ENCODE measurements at regions of chr2 and their contacts with region 1.

Region 1: GRCh38 chr2:118882709-118883210 is 35.3 kb upstream of the EN1 start:
- DNase-seq: peak; percentile 62
- CTCF ChIP-seq: peak; percentile 92

Region 2: DNA sequence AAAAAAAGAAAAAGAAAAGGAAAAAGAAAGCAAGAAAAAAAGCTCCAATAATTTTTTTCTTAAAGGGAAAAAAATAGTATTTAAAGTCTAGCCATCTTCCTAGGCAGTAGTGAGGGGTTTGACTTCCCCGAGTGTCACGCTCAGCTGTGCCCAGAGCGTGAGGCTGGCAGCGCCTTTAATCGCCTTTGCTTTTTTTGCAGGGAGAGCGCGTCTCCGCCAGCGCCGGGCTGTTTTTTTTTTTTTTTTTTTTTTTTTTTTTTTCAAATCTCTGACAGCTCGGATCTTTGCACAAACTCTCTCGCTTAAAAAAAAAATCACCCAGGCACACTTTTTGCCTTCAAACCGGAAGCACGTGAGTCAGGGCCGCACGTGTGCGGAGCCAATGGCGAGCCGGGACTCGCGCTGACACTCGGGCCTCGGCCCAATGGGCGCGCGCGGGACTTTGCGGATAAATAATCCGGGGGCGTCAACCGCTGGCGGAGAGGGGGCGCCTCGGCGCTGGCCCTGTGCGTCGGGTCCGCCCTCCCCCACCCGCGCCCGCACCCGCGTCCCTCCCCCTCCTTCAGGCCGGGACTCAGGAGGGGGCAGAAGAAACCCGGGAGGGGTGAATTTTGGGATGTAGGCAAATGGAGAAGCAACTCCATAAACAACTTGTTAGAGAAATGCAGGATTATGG is 35.1 kb before region 1 on chr2 and contains the start of gene EN1:
- CTCF ChIA-PET with region 1: interaction called, 10 read pairs
- POLR2A ChIA-PET with region 1: no interaction called
- DNase-seq: no peak
- CTCF ChIP-seq: no peak

Region 3: DNA sequence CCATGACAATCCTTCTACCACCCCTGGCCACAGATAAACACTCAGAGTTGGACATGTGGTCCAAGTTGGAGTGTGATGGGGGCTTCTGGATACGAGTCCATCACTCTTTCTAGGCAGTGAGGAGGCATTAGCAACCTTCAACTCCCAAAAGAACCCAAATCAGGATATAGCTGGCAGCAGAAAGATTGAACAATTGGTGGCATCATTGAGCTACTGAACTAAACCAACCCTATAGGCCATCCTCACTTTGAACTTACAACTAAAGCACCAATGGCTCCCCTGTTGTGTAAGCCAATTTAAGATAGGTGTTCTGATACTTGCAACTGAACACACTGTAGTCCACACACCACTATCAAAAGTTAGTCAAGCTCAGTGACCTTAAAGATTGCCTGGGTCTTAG is 35.3 kb after region 1 on chr2:
- CTCF ChIA-PET with region 1: interaction called, 18 read pairs
- POLR2A ChIA-PET with region 1: no interaction called
- DNase-seq: no peak
- CTCF ChIP-seq: no peak

Region 4: DNA sequence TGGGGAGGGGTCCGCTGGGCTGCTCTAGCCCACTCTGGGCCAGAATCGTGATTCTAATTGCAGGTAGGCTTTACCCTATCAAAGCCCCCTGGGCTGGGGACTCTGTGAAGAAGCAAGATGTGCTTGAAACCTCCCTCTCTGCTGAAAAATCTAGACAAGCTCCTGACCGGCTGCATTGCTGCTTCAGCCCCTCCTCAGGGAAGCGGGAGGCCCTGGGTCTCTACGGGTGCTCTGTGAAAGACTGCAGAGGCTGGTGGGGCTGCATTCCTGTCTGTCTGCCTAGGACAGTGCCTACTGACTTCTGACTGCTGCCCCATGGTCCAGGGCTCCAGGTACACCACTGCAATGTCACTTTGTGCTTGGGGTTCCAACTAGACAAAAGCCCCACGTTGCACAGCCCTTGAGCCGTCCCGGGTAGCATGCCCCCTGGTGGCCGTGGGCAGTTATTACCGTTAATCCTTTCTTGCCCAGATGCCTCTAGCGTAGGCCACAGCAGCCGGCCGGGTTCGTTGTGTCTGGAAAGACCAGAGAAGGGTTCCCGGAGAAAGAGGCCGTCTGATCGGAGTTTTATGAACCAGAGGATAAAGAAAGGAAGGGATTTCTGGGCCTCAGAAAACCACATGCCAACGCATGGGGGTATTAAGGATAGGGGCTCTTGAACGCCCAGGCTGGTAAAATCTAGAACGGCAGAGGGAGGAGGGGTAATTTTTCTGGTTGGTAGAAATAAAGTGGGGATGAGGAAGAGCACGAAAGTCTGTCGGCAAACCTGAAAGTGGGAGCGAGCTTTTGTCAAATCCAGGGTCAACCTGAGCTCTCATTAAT is 291.7 kb after region 1 on chr2:
- CTCF ChIA-PET with region 1: interaction called, 19 read pairs
- POLR2A ChIA-PET with region 1: no interaction called
- DNase-seq: peak; percentile 69
- CTCF ChIP-seq: peak; percentile 88

Region 5: GRCh38 chr2:119290859-119291587 is 408.3 kb after region 1 on chr2:
- CTCF ChIA-PET with region 1: interaction called, 97 read pairs
- POLR2A ChIA-PET with region 1: no interaction called
- DNase-seq: peak; percentile 67
- CTCF ChIP-seq: peak; percentile 97

Region 6: DNA sequence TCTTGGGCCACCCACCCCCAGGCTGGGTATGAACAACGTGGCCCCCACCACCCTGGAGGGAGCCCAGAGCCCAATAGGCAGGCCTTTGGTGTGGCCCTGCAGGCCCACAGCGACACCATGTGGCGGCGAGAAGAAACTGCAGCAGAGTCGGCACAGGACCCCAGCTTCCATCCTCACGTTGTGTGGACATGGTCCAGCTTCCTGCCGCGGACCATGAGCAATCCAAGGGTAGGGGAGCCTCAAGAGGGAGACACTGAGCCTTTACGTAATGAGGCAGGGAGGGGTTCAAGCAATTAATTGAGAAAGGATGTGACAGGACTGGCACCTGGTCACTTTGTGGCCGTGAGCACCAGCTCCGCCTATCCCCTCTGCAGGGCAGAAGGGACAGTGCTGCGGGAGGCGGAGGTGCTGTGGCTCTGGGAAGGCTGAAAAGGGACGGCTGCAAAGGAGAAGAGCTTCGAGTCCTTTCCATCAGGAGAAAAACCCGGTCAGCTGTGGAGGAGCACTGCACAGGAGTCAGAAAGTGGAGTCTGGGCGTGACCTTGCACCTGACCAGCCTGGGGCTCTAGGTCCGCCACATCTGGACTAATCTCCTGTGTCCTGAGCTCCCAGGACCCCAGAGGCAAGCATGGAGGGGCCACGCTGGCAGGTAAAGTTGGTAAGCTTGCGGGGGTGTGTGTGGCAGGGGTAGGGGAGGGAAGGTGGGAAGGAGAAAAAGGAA is 593.7 kb after region 1 on chr2:
- CTCF ChIA-PET with region 1: interaction called, 10 read pairs
- POLR2A ChIA-PET with region 1: no interaction called
- DNase-seq: peak; percentile 86
- CTCF ChIP-seq: peak; percentile 94